Breast epithelium (tissue), 4 donors: ENCODE measurements at regions of chr4 and their contacts with region 1.

Region 1: GRCh38 chr4:155639704-155640523 is 26.7 kb upstream of the GUCY1A1 start:
- DNase-seq: no peak
- H3K4me3 ChIP-seq: no peak overlapping the region
- H3K27ac ChIP-seq: peak overlapping the region; percentile 2 to 19
- H3K4me1 ChIP-seq: no peaks in the 10 kb centered on the region
- H3K27me3 ChIP-seq: no peaks in the 10 kb centered on the region
- CTCF ChIP-seq: no peak
- POLR2A ChIP-seq: no peak

Region 2: GRCh38 chr4:156946516-156947424 is 1306.9 kb after region 1 on chr4:
- intact Hi-C with region 1: loop called (anchors 5 kb)
- DNase-seq: no peak
- H3K4me3 ChIP-seq: no peak overlapping the region
- H3K27ac ChIP-seq: peak overlapping the region in 1 of 2 donors; percentile 62
- H3K4me1 ChIP-seq: no peaks in the 10 kb centered on the region
- H3K27me3 ChIP-seq: no peaks in the 10 kb centered on the region
- CTCF ChIP-seq: no peak
- POLR2A ChIP-seq: no peak